ENCODE measurements at regions of chr1 and their contacts with region 1.

Region 1: GRCh38 chr1:56644919-56645676 is at the start of gene PRKAA2:
- DNase-seq: peak; percentile 41
- ATAC-seq: peak; percentile 95
- H3K4me3 ChIP-seq: peak within 1 kb of the TSS; percentile 69 to 87 (median 80)
- H3K27ac ChIP-seq: peak within 1 kb of the TSS; percentile 78
- H3K4me1 ChIP-seq: peaks cover 41% of the 10 kb centered on the region
- H3K27me3 ChIP-seq: no peaks in the 10 kb centered on the region; a peak in 1 of 5 replicates
- CTCF ChIP-seq: peak; percentile 16; the same call in 1 of the 2 replicates
- EP300 ChIP-seq: 0 out of 4 replicates have a peak, but pooled peaks of 1 of the 2 experiments have one; percentile 15
- POLR2A ChIP-seq: peak in 1 of 2 experiments; percentile 79; a peak in 2 of 4 replicates
- RAD21 ChIP-seq: no peak; the same call in none of the 2 replicates
- total RNA-seq, gene PRKAA2: 6.0 and 8.6 TPM in 2 replicates

Region 2: GRCh38 chr1:56688506-56689026 is 43.5 kb after region 1 on chr1:
- CTCF ChIA-PET with region 1: no interaction called
- POLR2A ChIA-PET with region 1: interaction called, 18 read pairs
- in situ Hi-C with region 1: loop called (anchors 5 kb)
- intact Hi-C with region 1: loop called (anchors 5 kb)
- DNase-seq: peak; percentile 96
- ATAC-seq: peak; percentile 99
- H3K4me3 ChIP-seq: no peak overlapping the region; a peak in 1 of 6 replicates
- H3K27ac ChIP-seq: peak overlapping the region; percentile 39
- H3K4me1 ChIP-seq: peaks cover 36% of the 10 kb centered on the region
- H3K27me3 ChIP-seq: no peaks in the 10 kb centered on the region
- CTCF ChIP-seq: no peak
- EP300 ChIP-seq: peak in 1 of 2 experiments; percentile 84; a peak in 3 of 4 replicates
- POLR2A ChIP-seq: no peak
- RAD21 ChIP-seq: no peak